H1 (cell line): ENCODE measurements at regions of chr14 and their contacts with region 1.

Region 1: DNA sequence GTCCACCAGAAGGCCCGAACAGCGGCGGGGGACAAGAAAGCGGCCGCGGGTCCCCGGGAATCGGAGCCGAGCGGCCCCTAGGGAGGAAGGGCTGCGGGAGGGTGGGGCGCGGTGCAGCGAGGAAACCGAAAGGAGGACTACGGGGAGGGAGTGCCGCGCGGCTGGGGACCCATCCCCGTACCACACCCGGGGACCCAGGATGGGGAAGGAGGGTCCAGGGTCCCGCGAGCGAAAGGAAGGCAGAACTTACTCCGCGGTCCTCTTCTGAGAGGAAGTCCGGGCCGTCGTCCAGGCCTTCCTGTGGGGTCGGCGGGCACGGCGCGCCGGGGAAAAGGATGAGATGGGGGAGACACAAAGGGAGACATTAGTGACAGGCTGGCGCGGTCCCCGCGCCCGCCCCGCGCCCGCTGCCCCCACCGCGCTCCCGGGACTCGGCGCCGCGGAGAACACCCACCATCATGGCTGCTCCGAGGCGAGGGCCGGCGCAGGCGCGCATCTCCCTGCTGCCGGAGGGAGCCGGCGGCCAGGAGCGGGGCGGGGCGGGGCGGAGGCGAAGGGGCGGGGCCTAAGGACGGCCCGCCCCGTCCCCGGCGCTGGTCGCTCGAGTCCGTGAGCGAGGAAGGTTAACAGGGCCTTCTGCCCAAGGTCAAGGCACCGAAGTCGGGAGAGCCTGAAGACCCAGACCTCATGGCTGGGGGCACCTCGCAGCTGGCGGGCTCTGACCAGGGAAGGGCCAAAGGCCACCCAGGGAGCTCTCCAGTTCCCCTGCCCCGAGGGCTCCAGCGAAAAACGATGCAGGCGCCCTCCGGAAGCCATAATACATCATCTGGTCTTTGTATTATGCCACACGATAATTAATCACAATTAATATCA is at the start of gene SNX6:
- DNase-seq: peak; percentile 5 to 84
- H3K4me3 ChIP-seq: peak within 1 kb of the TSS; percentile 91 to 99 (median 92)
- H3K27ac ChIP-seq: peak within 1 kb of the TSS; percentile 86
- H3K4me1 ChIP-seq: peaks cover 0 to 2% (median under 1%) of the 10 kb centered on the region in 4 experiments; a peak in 1 of 7 replicates
- H3K27me3 ChIP-seq: no peaks in the 10 kb centered on the region
- CTCF ChIP-seq: no peak
- EP300 ChIP-seq: no peak
- POLR2A ChIP-seq: peak; percentile 70 to 87
- RAD21 ChIP-seq: no peak
- total RNA-seq, gene SNX6: 54.8 and 71.1 TPM in 2 replicates

Region 2: GRCh38 chr14:34614638-34615037 is 15.3 kb before region 1 on chr14:
- CTCF ChIA-PET with region 1: interaction called, 3 read pairs
- POLR2A ChIA-PET with region 1: interaction called, 11 read pairs
- DNase-seq: no peak
- H3K4me3 ChIP-seq: no peak overlapping the region
- H3K27ac ChIP-seq: no peak overlapping the region
- H3K4me1 ChIP-seq: no peaks in the 10 kb centered on the region
- H3K27me3 ChIP-seq: no peaks in the 10 kb centered on the region
- CTCF ChIP-seq: no peak
- EP300 ChIP-seq: no peak
- POLR2A ChIP-seq: no peak
- RAD21 ChIP-seq: no peak

Region 3: DNA sequence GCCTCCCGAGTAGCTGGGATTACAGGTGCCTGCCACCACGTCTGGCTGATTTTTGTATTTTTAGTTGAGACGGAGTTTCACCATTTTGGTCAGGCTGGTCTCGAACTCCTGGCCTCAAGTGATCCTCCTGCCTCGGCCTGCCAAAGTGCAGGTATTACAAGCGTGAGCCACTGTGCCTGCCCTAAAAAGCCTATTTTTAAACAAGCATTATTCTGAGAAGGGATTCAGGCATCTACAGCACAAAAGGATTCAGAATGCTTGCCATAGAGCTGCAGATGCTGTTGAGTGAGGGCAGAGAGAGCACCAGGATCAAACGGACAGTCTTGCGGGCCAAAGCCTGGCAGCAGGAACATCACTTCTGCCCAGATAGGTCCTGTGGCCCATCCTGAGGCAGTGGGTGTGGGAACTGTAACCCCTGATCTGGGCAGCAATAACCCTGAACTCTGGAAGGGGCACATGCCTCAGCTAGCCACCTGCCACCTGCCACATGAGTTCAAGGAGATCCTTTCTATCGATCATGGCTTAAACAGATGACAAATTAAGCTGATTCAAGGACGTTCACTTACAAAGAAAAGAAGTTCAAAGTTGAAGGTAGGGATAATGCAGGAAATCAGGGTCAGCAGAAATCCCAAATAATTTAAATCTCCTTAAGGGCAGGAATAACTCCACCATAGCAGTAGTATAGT is 16.8 kb after region 1 on chr14:
- CTCF ChIA-PET with region 1: no interaction called
- POLR2A ChIA-PET with region 1: no interaction called
- DNase-seq: no peak
- H3K4me3 ChIP-seq: no peak overlapping the region
- H3K27ac ChIP-seq: no peak overlapping the region
- H3K4me1 ChIP-seq: no peaks in the 10 kb centered on the region; a peak in 1 of 7 replicates
- H3K27me3 ChIP-seq: no peaks in the 10 kb centered on the region
- CTCF ChIP-seq: no peak
- EP300 ChIP-seq: no peak
- POLR2A ChIP-seq: no peak
- RAD21 ChIP-seq: no peak